ENCODE measurements at regions of chr14 and their contacts with region 1.

Region 1: GRCh38 chr14:51651388-51652167 is at the start of gene FRMD6:
- DNase-seq: peak; percentile 82
- H3K4me3 Mint-ChIP-seq: peak within 1 kb of the TSS; percentile 78
- H3K27ac Mint-ChIP-seq: peak within 1 kb of the TSS; percentile 41
- H3K4me1 Mint-ChIP-seq: peaks cover 21% of the 10 kb centered on the region
- H3K27me3 Mint-ChIP-seq: peaks cover 7% of the 10 kb centered on the region
- total RNA-seq, gene FRMD6: 3.0 to 3.2 TPM

Region 2: DNA sequence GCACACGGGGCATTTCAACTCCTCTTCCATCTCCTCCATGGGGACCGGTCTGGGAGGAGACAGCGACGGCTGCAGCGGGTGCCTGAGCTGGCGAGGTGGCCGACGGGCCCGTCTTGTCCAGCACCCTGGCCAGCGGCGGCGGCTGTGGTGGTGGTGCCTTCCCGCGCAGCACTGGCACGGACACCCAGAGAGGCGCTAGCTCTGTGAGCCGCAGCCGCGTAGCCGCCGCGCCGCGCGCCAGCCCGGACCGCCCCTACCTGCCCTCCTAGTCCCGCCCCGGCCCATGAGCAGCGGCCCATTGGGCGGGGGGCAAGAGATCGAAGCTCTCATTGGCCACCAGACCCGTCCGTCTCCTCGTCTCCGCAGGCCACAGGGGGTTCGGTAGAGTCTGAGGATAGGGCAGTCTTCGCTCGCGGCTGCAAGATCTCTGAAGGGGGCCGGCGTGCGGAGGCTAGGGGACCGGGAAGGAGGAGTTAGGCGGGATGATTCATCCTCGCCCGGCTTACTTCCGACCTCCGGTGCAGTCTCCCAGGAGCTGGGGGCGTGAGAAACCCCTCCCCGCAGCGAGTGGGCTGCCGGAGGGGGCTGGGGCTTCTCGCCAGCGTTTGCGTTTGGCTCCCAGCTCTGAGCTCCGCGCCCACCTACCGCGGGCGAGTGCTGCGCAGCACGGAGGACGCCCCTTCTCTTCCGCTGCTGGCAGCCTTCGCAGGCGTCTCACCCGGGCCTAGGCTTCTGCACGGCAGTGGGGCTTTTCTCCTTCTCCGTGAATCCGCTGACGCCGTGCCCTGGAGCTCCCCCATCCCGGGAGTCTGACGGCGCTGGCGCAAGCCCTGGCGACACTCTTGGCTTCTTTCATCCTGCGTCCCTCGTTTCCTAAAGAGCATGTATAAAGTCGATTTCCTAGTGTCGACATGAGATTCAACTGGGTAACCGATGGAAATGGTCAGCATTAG is 556.4 kb before region 1 on chr14 and contains the start of gene TRIM9:
- CTCF ChIA-PET with region 1: no interaction called
- intact Hi-C with region 1: loop called (anchors 5 kb)
- DNase-seq: peak; percentile 95
- H3K4me3 Mint-ChIP-seq: peak within 1 kb of the TSS; percentile 86
- H3K27ac Mint-ChIP-seq: peak within 1 kb of the TSS; percentile 65
- H3K4me1 Mint-ChIP-seq: peaks cover 12% of the 10 kb centered on the region
- H3K27me3 Mint-ChIP-seq: peaks cover 13% of the 10 kb centered on the region
- total RNA-seq, gene TRIM9: 0.76 to 1.1 TPM

Region 3: DNA sequence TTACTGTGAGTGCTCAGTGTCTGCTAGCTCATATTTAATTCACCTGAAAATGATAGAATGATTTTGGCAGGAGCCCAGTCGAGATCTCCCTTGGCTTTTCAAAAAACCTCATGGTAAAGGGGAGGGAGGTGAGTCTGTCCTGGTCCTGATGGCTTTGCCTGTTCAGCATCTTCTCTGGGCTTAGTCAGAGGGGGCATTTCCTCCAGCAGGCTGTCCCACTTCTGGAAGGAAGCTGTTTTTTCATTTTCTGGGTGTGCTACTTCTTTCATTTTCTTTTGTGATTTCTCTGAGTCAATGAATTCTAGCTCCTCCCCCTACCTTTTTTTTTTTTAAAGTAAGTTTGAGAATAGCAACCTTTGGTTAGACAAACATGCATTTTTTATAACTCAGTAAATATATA is 352.7 kb before region 1 on chr14:
- CTCF ChIA-PET with region 1: no interaction called
- intact Hi-C with region 1: loop called (anchors 5 kb)
- DNase-seq: peak; percentile 53
- H3K4me3 Mint-ChIP-seq: no peak overlapping the region
- H3K27ac Mint-ChIP-seq: no peak overlapping the region
- H3K4me1 Mint-ChIP-seq: peaks cover 12% of the 10 kb centered on the region
- H3K27me3 Mint-ChIP-seq: peaks cover 5% of the 10 kb centered on the region

Region 4: GRCh38 chr14:51575349-51576116 is 76.0 kb before region 1 on chr14:
- CTCF ChIA-PET with region 1: no interaction called
- intact Hi-C with region 1: no loop called
- DNase-seq: no peak
- H3K4me3 Mint-ChIP-seq: no peak overlapping the region
- H3K27ac Mint-ChIP-seq: no peak overlapping the region
- H3K4me1 Mint-ChIP-seq: no peaks in the 10 kb centered on the region
- H3K27me3 Mint-ChIP-seq: peaks cover 17% of the 10 kb centered on the region

Region 5: GRCh38 chr14:51744372-51745130 is 93.0 kb after region 1 on chr14:
- CTCF ChIA-PET with region 1: interaction called, 10 read pairs
- intact Hi-C with region 1: loop called (anchors 5 kb)
- DNase-seq: peak; percentile 27
- H3K4me3 Mint-ChIP-seq: no peak overlapping the region
- H3K27ac Mint-ChIP-seq: no peak overlapping the region
- H3K4me1 Mint-ChIP-seq: no peaks in the 10 kb centered on the region
- H3K27me3 Mint-ChIP-seq: no peaks in the 10 kb centered on the region

Region 6: DNA sequence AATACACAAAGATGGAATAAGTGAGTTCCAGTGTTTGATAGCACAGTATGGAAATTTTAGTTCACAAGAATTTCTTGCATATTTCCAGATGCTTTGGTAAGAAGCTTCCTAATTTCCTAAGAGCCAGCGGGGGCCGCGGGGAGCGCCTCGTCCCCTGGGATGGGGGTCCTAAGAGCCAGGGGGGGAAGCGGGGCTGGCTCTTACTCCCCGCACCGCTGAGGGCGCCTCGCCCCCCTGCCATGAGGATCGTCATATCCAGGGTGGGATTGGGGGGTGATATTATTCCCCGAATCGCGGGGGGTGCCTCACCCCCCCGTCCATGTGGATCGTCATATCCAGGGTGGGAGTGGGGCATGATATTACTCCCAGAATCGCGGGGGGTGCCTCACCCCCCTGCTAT is 108.4 kb after region 1 on chr14:
- CTCF ChIA-PET with region 1: no interaction called
- intact Hi-C with region 1: no loop called
- DNase-seq: no peak
- H3K4me3 Mint-ChIP-seq: no peak overlapping the region
- H3K27ac Mint-ChIP-seq: no peak overlapping the region
- H3K4me1 Mint-ChIP-seq: peaks cover 8% of the 10 kb centered on the region
- H3K27me3 Mint-ChIP-seq: peaks cover 9% of the 10 kb centered on the region

Region 7: GRCh38 chr14:51860164-51860824 is 208.7 kb after region 1 on chr14 and contains the start of gene GNG2:
- CTCF ChIA-PET with region 1: interaction called, 5 read pairs
- intact Hi-C with region 1: loop called (anchors 5 kb)
- DNase-seq: peak; percentile 91
- H3K4me3 Mint-ChIP-seq: peak within 1 kb of the TSS; percentile 96
- H3K27ac Mint-ChIP-seq: peak within 1 kb of the TSS; percentile 94
- H3K4me1 Mint-ChIP-seq: peaks cover 51% of the 10 kb centered on the region
- H3K27me3 Mint-ChIP-seq: no peaks in the 10 kb centered on the region
- total RNA-seq, gene GNG2: 176 to 181 TPM